ENCODE measurements at regions of chr13 and their contacts with region 1.

Region 1: DNA sequence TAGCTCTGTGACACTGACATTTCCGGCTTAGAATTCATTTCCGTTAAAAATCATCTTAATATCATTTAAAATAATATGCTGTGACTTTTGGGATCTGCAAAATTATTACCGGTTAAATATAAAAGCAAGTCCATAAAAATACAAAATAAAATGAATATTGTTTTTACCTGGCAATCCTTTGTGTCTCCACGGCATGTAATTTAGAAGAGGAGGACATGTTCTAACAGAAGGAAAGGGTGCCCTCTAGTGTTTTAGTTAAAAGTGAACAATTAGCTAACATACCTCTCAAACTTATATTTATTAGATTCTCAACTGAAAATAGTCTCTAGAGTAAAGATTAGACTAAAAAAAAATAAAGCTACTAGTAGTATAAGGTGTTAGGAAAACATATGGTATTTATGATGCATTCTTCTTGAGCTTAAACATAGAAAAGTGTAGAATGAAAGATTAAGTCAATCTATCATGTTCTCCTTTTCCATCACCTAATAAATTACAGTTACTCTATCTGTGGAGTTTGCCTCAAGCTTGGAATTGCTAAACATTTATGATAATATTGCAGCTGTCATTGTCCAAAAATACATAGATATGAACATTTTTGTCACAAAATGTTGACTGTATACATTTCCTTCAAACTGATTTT is 676.7 kb upstream of the SPRY2 start:
- DNase-seq: no peak
- H3K4me3 ChIP-seq: no peak overlapping the region
- H3K27ac ChIP-seq: no peak overlapping the region
- H3K4me1 ChIP-seq: no peaks in the 10 kb centered on the region
- H3K27me3 ChIP-seq: no peaks in the 10 kb centered on the region
- CTCF ChIP-seq: peak; percentile 70

Region 2: DNA sequence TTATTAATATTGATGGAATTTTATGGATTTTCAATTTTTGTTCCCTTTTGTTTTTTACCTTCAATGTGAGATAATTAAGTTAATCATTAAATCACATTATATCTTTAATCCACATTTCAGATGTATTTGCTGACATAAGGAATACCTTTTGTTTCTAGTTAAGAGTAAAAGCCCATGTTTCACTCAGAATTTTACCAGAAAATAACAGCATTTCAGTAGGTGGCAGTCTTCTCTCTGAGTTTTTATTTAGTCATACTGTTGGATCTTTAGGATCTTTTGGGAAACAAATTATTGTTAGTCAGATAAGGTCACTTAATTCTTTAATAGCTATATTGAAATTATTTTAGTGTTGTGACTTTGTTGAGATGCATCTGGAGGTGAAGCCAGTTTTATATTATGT is 1468.7 kb before region 1 on chr13:
- CTCF ChIA-PET with region 1: no interaction called
- POLR2A ChIA-PET with region 1: no interaction called
- intact Hi-C with region 1: loop called (anchors 1 kb)
- DNase-seq: no peak
- H3K4me3 ChIP-seq: no peak overlapping the region
- H3K27ac ChIP-seq: peak overlapping the region; percentile 16; the same call in 1 of the 2 replicates
- H3K4me1 ChIP-seq: no peaks in the 10 kb centered on the region
- H3K27me3 ChIP-seq: no peaks in the 10 kb centered on the region
- CTCF ChIP-seq: peak; percentile 43; the same call in 1 of the 2 replicates

Region 3: GRCh38 chr13:80399340-80400163 is 618.1 kb before region 1 on chr13:
- CTCF ChIA-PET with region 1: no interaction called
- POLR2A ChIA-PET with region 1: no interaction called
- intact Hi-C with region 1: no loop called
- DNase-seq: peak; percentile 10 to 62
- H3K4me3 ChIP-seq: no peak overlapping the region
- H3K27ac ChIP-seq: no peak overlapping the region
- H3K4me1 ChIP-seq: peaks cover 8% of the 10 kb centered on the region; the same call in 1 of the 2 replicates
- H3K27me3 ChIP-seq: no peaks in the 10 kb centered on the region
- CTCF ChIP-seq: no peak